ENCODE measurements at regions of chr11 and their contacts with region 1.

Region 1: DNA sequence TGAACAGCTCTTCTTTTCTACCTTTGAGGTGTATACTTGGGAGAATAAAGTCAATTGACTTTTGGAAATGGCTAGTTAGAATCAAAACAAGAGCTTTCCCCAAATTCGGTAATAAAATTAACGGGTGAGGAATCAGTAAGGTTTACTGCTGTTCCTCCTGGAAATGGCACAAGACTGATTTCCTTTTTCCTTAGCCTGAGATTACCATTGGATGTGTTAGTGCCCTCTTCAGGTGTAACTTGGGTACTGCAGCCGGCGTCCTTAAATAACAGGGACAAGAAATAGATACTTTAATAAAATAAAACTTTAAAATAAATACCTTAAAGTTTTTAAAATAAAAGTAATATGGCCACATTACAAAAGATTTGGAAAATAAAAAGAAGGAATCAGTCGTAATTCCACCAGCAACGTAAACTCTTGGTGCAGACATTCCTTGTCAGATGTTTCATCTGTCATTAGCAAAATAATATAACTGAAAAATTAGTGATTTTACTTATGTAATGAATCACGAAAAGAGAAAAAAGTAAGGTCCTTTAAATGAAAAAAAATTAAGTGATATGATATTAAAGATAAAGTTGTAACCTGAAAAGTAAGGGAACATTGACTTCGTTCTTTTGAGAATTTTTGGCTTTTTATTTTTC is 29.7 kb downstream of the ZFTA start:
- DNase-seq: peak; percentile 74 to 81
- H3K4me3 ChIP-seq: no peak overlapping the region
- H3K27ac ChIP-seq: peak overlapping the region; percentile 20 to 25 (median 20)
- H3K4me1 ChIP-seq: peaks cover 4 to 11% of the 10 kb centered on the region in 2 donors
- H3K27me3 ChIP-seq: no peaks in the 10 kb centered on the region
- CTCF ChIP-seq: peak; percentile 80 to 98 (median 92)
- POLR2A ChIP-seq: no peak

Region 2: DNA sequence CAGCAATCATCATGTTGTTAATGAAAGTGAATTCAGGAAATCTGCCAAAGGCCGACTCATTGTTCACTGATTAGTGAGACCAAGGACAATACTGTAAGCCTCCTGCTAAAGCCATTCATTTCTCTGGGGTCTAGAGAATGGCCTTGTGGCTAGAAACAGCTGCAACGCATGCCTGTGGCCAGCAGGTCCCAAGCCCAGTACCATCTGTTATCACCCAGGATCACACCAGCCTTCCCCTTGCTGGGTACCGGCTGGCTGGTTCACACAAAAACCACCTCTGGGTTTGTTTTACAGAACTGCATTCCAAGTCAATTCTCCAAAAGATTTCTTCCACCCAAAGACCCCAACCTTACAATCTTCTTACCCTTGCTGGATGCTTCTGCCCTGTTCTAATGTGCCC is 249.0 kb before region 1 on chr11:
- intact Hi-C with region 1: loop called (anchors 10 kb)
- DNase-seq: no peak
- H3K4me3 ChIP-seq: no peak overlapping the region
- H3K27ac ChIP-seq: no peak overlapping the region
- H3K4me1 ChIP-seq: no peaks in the 10 kb centered on the region
- H3K27me3 ChIP-seq: no peaks in the 10 kb centered on the region
- CTCF ChIP-seq: no peak
- POLR2A ChIP-seq: no peak

Region 3: DNA sequence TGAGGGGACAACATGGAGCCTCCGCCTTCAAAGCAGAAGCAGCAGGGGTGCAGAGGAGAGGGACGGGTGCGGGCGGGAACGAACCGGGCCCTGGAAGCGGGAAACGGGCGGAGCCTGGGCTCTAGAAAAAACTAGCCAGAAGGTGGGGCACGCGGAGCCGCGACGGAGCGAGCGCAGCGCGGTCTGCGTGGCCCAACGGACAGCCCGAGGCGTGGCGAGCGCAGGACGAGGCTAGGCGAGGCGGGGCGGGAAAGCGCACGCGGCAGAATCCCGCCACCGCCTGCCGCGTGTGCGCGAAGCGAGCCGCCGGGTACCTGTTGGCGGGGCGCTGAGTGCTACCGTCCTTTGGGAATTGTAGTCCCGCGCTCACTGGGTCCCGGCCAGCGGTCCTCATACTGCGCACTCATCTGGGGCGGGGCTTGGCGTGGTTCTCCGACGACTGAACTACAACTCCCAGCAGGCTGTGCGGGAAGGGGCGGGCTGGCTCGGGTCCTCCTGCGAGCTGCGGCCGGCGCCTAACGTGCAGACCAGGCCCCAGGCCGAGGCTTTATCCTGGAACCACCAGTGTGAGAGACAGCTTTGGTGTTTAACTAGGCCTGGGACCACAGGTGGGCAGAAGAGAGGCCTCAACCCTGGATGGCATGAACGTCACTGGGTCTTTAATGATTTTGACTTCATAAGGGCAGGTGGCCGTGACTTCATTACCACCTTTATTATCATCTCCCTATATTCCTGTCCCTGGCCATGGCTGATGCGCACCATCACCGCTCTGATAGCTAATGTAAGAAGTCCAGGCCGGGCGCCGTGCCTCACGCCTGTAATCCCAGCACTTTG is 67.3 kb before region 1 on chr11 and contains the start of gene ATL3:
- intact Hi-C with region 1: loop called (anchors 5 kb)
- DNase-seq: peak; percentile 98 to 99
- H3K4me3 ChIP-seq: peak within 1 kb of the TSS; percentile 73 to 93 (median 83)
- H3K27ac ChIP-seq: peak within 1 kb of the TSS; percentile 98 to 100 (median 98)
- H3K4me1 ChIP-seq: peaks cover 33 to 42% of the 10 kb centered on the region in 2 donors
- H3K27me3 ChIP-seq: no peaks in the 10 kb centered on the region
- CTCF ChIP-seq: peak in 1 of 6 experiments; percentile 22
- POLR2A ChIP-seq: peak; percentile 39 to 79
- total RNA-seq, gene ATL3: 78.7 to 106 (median 98.4) TPM

Measured in thyroid gland (tissue), 4 donors.